ENCODE measurements at regions of chr16 and their contacts with region 1.

Region 1: DNA sequence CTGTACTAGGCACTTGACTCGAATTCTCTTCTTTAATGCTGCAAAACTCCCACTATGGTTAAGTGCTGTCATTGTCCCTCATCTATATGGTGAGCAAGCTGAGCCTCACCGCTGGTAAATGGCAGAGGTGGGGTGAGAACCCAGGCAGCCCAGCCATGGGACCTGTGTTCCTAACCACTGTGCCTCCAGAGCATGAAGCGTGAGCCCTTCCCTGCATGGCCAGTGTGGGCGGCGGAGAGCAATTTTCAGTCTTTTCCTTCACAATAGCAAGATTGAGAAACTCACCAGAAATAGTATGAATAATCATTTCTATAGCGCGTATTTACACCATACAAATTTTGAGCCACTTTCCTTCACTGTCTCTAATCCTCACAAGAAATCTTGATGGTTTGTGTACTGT is 9.2 kb downstream of the BFAR start:
- DNase-seq: no peak
- ATAC-seq: peak; percentile 73
- H3K4me3 Mint-ChIP-seq: no peak overlapping the region
- H3K27ac Mint-ChIP-seq: peak overlapping the region; percentile 78
- H3K4me1 Mint-ChIP-seq: peaks cover 31% of the 10 kb centered on the region
- H3K27me3 Mint-ChIP-seq: no peaks in the 10 kb centered on the region
- CTCF ChIP-seq: no peak

Region 2: GRCh38 chr16:14196539-14196938 is 445.4 kb before region 1 on chr16:
- CTCF ChIA-PET with region 1: no interaction called
- POLR2A ChIA-PET with region 1: interaction called, 12 read pairs
- DNase-seq: no peak
- ATAC-seq: no peak
- H3K4me3 Mint-ChIP-seq: no peak overlapping the region
- H3K27ac Mint-ChIP-seq: no peak overlapping the region
- H3K4me1 Mint-ChIP-seq: 0 out of 2 replicates have a peak, but pooled peaks cover 3% of the 10 kb centered on the region
- H3K27me3 Mint-ChIP-seq: no peaks in the 10 kb centered on the region
- CTCF ChIP-seq: no peak

Region 3: DNA sequence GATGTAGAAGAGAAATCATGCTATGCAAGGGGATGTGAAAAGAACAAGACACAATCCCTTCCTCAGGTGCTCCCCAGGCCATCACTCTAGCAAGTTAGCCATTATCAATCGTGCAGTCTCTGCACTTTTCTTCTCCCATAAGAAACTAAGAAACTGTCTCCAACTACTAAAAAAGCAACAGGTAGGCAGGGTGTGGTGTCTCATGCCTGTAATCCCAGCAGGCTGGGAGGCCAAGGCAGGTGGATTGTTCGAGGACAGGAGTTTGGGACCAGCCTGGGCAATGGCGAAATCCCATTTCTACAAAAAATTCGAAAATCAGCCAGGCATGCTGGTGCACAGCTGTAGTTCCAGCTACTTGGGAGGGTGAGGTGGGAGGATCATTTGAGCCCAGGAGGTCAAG is 25.6 kb before region 1 on chr16:
- CTCF ChIA-PET with region 1: no interaction called
- POLR2A ChIA-PET with region 1: no interaction called
- DNase-seq: no peak
- ATAC-seq: no peak
- H3K4me3 Mint-ChIP-seq: no peak overlapping the region
- H3K27ac Mint-ChIP-seq: no peak overlapping the region
- H3K4me1 Mint-ChIP-seq: no peaks in the 10 kb centered on the region
- H3K27me3 Mint-ChIP-seq: no peaks in the 10 kb centered on the region
- CTCF ChIP-seq: no peak

Region 4: DNA sequence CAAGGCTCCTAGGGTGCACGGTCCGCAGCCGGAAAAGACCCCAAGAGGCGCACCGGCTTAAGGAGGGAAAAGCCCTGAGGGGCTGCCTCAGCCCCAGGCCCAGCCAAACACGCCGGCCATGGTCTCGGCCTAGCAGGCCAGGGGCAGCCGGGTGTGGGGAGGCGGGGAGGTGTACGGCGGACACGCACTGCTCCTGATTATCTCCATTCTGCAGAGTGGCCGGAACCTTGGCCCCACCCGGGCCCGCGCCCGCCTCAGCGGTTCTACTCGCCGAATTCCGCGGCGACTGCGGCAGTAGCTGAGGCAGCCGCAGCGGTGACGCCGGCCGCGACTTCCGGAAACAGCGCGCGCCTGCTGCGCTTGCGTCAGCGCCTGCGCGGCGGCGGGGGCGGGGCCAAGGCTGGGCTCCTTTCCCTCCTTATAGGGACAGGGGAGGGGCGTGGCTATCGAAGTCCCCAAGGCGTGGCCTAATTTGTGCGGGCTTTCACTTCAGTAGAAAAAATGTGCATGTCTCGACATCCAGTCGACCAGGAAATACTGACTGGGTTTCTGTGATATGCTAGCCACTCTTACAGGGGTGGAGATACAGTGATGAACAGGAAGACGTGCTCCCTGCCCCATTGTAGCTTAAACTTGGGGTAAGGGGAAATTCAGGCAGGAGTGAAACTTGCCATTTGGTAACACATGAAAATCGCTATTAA is 11.9 kb before region 1 on chr16 and contains the start of gene PARN:
- CTCF ChIA-PET with region 1: interaction called, 3 read pairs
- POLR2A ChIA-PET with region 1: interaction called, 11 read pairs
- DNase-seq: peak; percentile 98
- ATAC-seq: peak; percentile 60
- H3K4me3 Mint-ChIP-seq: peak within 1 kb of the TSS; percentile 95
- H3K27ac Mint-ChIP-seq: peak within 1 kb of the TSS; percentile 99
- H3K4me1 Mint-ChIP-seq: peaks cover 24% of the 10 kb centered on the region
- H3K27me3 Mint-ChIP-seq: no peaks in the 10 kb centered on the region
- CTCF ChIP-seq: no peak
- total RNA-seq, gene PARN: 37.7 to 39.4 TPM (median 38.5 TPM) in 3 replicates

Region 5: DNA sequence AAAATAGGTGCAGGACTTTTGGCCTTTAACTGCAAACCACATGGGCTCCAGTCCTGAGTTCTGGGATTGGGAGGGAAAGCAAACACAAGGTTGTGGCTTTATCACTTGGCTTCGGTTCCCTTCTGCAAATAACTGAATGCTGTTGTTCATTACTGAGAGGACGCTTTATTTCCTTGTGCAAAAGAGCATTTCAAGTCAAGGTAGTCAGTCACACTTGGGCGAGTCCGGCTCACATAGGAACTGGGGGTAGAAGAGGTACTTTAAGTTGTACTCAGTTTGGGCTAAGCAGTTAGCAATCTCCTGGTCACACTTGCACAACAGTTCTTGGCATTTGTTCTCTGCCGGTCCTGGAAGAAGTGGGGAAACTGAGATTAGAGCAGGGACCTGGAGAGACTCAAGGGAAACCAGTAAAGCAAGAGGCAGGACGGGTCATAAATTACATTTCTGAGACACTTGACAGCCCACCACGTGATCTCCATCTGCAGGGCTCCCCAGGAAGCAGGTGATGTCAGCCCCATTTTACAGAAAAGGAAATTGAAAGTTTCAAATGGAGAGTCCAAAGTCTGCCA is 30.6 kb after region 1 on chr16:
- CTCF ChIA-PET with region 1: no interaction called
- POLR2A ChIA-PET with region 1: no interaction called
- DNase-seq: no peak
- ATAC-seq: no peak
- H3K4me3 Mint-ChIP-seq: no peak overlapping the region
- H3K27ac Mint-ChIP-seq: no peak overlapping the region
- H3K4me1 Mint-ChIP-seq: no peaks in the 10 kb centered on the region
- H3K27me3 Mint-ChIP-seq: no peaks in the 10 kb centered on the region
- CTCF ChIP-seq: no peak

Measured in WTC11 (cell line).